ENCODE measurements at regions of chr11 and their contacts with region 1.

Region 1: GRCh38 chr11:103940542-103940941 is 95.9 kb upstream of the DDI1 start:
- DNase-seq: peak; percentile 39
- H3K4me3 Mint-ChIP-seq: no peak overlapping the region
- H3K27ac Mint-ChIP-seq: peak overlapping the region; percentile 57
- H3K4me1 Mint-ChIP-seq: peaks cover 26% of the 10 kb centered on the region
- H3K27me3 Mint-ChIP-seq: no peaks in the 10 kb centered on the region
- CTCF ChIP-seq: no peak

Region 2: GRCh38 chr11:104164028-104164520 is 223.5 kb after region 1 on chr11 and contains the start of gene PDGFD:
- CTCF ChIA-PET with region 1: interaction called, 3 read pairs
- POLR2A ChIA-PET with region 1: interaction called, 12 read pairs
- intact Hi-C with region 1: no loop called
- DNase-seq: peak; percentile 35
- H3K4me3 Mint-ChIP-seq: peak within 1 kb of the TSS; percentile 81
- H3K27ac Mint-ChIP-seq: no peak within 1 kb of the TSS
- H3K4me1 Mint-ChIP-seq: no peaks in the 10 kb centered on the region
- H3K27me3 Mint-ChIP-seq: no peaks in the 10 kb centered on the region
- CTCF ChIP-seq: no peak
- total RNA-seq, gene PDGFD: 0.27 and 0.61 TPM in 2 replicates

Measured in MCF 10A (cell line).